GM18951 (cell line): ENCODE measurements at regions of chr19 and their contacts with region 1.

Region 1: GRCh38 chr19:12139885-12140547 is at the start of gene ZNF20:
- POLR2A ChIP-seq: peak; percentile 61

Region 2: GRCh38 chr19:11798391-11799330 is 341.4 kb before region 1 on chr19 and contains the start of gene ZNF491:
- in situ Hi-C with region 1: loop called (anchors 10 kb)
- POLR2A ChIP-seq: peak; percentile 60

Region 3: GRCh38 chr19:11964858-11965645 is 175.0 kb before region 1 on chr19 and contains the start of gene ZNF763:
- in situ Hi-C with region 1: loop called (anchors 10 kb)
- POLR2A ChIP-seq: peak; percentile 69

Region 4: GRCh38 chr19:12194827-12195731 is 55.1 kb after region 1 on chr19:
- in situ Hi-C with region 1: no loop called
- POLR2A ChIP-seq: peak; percentile 23

Region 5: DNA sequence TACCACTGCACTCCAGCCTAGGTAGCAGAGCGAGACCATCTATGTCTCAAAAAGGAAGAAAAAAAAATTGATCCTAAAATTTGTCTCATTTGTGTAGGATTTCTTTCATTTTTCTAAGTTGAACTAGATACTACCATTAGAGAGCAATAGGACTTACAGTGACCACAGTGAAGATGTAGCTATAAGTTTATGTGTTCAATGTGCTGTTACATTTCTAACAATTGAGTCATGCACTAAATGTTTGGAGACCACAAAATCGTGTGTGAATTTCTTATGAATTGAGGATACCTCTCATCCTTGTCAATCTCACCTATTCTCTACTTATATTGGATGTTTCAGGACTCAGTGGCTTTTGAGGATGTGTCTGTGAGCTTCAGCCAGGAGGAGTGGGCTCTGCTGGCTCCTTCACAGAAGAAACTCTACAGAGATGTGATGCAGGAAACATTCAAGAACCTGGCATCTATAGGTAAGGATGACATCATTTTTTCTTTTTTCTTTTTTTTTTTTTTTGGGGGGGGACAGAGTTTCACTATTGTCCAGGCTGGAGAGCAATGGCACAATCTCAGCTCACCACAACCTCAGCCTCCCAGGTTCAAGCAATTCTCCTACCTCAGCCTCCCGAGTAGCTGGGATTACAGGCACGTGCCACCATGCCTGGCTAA is 483.5 kb after region 1 on chr19:
- in situ Hi-C with region 1: no loop called
- POLR2A ChIP-seq: no peak